Transverse colon (tissue), 4 donors: ENCODE measurements at regions of chr7 and their contacts with region 1.

Region 1: GRCh38 chr7:20798081-20798693 is 11.5 kb upstream of the SP8 start:
- DNase-seq: peak; percentile 69
- H3K4me3 ChIP-seq: peak overlapping the region; percentile 11 to 73 (median 45)
- H3K27ac ChIP-seq: no peak overlapping the region
- H3K4me1 ChIP-seq: peaks cover 7 to 21% (median 18%) of the 10 kb centered on the region in 4 donors
- H3K27me3 ChIP-seq: peaks cover 91% of the 10 kb centered on the region
- CTCF ChIP-seq: no peak
- EP300 ChIP-seq: no peak
- POLR2A ChIP-seq: no peak

Region 2: GRCh38 chr7:20862554-20862953 is 64.4 kb after region 1 on chr7:
- in situ Hi-C with region 1: no loop called
- intact Hi-C with region 1: no loop called
- DNase-seq: no peak
- H3K4me3 ChIP-seq: no peak overlapping the region
- H3K27ac ChIP-seq: no peak overlapping the region
- H3K4me1 ChIP-seq: no peaks in the 10 kb centered on the region
- H3K27me3 ChIP-seq: no peaks in the 10 kb centered on the region
- CTCF ChIP-seq: no peak
- EP300 ChIP-seq: no peak
- POLR2A ChIP-seq: no peak

Region 3: GRCh38 chr7:21243265-21243664 is 445.1 kb after region 1 on chr7:
- in situ Hi-C with region 1: loop called in 1 of 4 experiments (anchors 25 kb)
- intact Hi-C with region 1: no loop called
- DNase-seq: no peak
- H3K4me3 ChIP-seq: no peak overlapping the region
- H3K27ac ChIP-seq: no peak overlapping the region
- H3K4me1 ChIP-seq: no peaks in the 10 kb centered on the region
- H3K27me3 ChIP-seq: peaks cover 14% of the 10 kb centered on the region
- CTCF ChIP-seq: no peak
- EP300 ChIP-seq: no peak
- POLR2A ChIP-seq: no peak

Region 4: DNA sequence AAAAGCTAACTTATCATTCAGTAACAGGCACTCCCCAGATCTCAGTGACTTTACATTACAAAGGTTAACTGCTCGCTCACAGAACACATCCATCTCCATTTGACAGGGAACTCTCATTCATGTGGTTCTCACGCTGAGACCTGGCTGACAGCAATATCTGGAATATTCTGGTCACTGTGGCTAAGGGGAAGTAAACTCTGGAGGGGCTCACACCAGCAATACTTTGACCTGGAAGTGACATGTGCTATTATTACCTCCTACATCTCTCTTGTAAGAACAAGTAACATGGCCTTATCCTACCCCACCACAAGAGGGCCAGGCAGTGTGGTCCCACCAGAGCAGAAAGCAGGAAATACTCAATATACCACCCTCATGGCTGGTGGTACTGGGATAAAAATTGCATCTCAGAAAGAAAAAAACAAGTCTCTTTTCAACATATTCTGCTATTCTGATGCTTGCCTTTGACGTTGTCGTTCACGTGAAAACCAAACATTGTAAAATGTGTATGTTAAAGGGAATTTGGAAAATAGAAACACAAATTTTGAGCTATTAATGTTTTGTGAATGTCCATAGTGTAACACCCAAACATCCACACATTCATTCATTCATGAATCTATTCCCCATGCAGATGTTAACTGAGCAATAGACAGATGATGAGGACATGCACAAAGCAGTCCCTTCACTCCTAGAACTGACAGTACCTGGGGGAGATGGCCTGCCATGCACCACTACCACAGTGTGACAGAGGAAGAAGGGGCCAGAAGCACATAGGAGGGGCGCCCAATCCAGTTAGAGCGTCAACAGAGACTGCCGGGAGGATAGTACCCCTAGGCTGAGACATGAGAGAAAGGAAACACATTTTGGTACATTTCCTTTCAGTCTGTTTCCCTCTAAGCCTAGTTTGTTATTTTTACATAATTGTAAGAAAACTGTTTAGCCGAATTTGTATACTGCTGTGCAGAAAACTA is 463.7 kb after region 1 on chr7:
- in situ Hi-C with region 1: loop called in 3 of 4 experiments (anchors 25 kb)
- intact Hi-C with region 1: no loop called
- DNase-seq: peak; percentile 25
- H3K4me3 ChIP-seq: no peak overlapping the region
- H3K27ac ChIP-seq: no peak overlapping the region
- H3K4me1 ChIP-seq: no peaks in the 10 kb centered on the region
- H3K27me3 ChIP-seq: peaks cover 20% of the 10 kb centered on the region
- CTCF ChIP-seq: peak; percentile 30 to 48 (median 39)
- EP300 ChIP-seq: no peak
- POLR2A ChIP-seq: no peak

Region 5: DNA sequence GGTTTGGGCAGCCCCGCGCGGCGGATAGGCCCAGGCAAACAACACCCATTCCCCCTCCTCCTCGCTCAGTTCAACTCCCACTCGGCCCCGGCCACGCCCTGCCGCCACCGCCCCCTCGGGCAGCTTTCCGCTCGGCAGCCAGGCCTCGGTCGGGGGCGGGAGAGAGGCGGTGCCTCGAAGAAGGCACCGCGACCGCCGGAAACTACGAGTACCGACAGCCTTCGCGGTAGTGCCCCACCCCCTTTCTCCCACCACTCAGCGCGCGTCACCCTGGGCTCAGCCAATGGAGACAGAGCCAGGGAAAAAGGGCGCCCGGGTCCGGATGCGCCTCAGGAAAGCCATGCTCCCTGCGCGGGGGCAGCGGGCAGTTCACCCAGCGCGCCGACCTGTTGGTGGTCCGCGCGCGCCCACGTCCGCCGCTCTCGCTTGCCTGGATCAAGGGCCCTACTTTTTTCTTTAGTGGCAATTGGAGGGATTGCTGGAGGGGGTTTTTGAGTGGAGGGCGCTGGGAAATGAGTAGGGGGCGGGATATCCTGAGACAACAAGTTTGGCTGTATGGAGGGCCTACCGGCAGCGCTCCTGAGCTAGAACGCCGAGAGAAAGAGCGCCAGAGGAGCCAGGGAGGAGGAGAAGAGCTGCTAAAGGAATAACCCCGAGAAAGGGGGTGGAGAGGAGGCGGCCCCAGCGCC is 629.1 kb after region 1 on chr7:
- in situ Hi-C with region 1: no loop called
- intact Hi-C with region 1: loop called (anchors 10 kb)
- DNase-seq: peak; percentile 99
- H3K4me3 ChIP-seq: peak overlapping the region; percentile 67 to 99 (median 91)
- H3K27ac ChIP-seq: peak overlapping the region; percentile 95 to 100 (median 98)
- H3K4me1 ChIP-seq: peaks cover 4 to 40% (median 11%) of the 10 kb centered on the region in 4 donors
- H3K27me3 ChIP-seq: no peaks in the 10 kb centered on the region
- CTCF ChIP-seq: peak in 4 of 5 experiments; percentile 19 to 51 (median 32)
- EP300 ChIP-seq: no peak
- POLR2A ChIP-seq: peak; percentile 81

Region 6: GRCh38 chr7:21507626-21508343 is 709.6 kb after region 1 on chr7:
- in situ Hi-C with region 1: loop called in 2 of 4 experiments (anchors 25 kb)
- intact Hi-C with region 1: no loop called
- DNase-seq: peak; percentile 55
- H3K4me3 ChIP-seq: no peak overlapping the region
- H3K27ac ChIP-seq: no peak overlapping the region
- H3K4me1 ChIP-seq: no peaks in the 10 kb centered on the region
- H3K27me3 ChIP-seq: no peaks in the 10 kb centered on the region
- CTCF ChIP-seq: peak; percentile 69 to 77 (median 73)
- EP300 ChIP-seq: no peak
- POLR2A ChIP-seq: no peak